HepG2 (cell line): ENCODE measurements at regions of chr20 and their contacts with region 1.

Region 1: GRCh38 chr20:35699127-35699975 is at the starts of genes NFS1 and ROMO1:
- DNase-seq: peak; percentile 94
- ATAC-seq: peak; percentile 84
- H3K4me3 ChIP-seq: peak within 1 kb of the TSS; percentile 90 to 98 (median 96)
- H3K27ac ChIP-seq: peak within 1 kb of the TSS; percentile 88
- H3K4me1 ChIP-seq: peaks cover 49% of the 10 kb centered on the region
- H3K27me3 ChIP-seq: no peaks in the 10 kb centered on the region; a peak in 1 of 5 replicates
- CTCF ChIP-seq: peak; percentile 94
- EP300 ChIP-seq: peak; percentile 19 to 54; a peak in 3 of 4 replicates
- POLR2A ChIP-seq: peak; percentile 93 to 96
- RAD21 ChIP-seq: peak; percentile 96
- total RNA-seq, gene NFS1: 88.1 and 94.4 TPM in 2 replicates
- total RNA-seq, gene ROMO1: 636 and 726 TPM in 2 replicates

Region 2: DNA sequence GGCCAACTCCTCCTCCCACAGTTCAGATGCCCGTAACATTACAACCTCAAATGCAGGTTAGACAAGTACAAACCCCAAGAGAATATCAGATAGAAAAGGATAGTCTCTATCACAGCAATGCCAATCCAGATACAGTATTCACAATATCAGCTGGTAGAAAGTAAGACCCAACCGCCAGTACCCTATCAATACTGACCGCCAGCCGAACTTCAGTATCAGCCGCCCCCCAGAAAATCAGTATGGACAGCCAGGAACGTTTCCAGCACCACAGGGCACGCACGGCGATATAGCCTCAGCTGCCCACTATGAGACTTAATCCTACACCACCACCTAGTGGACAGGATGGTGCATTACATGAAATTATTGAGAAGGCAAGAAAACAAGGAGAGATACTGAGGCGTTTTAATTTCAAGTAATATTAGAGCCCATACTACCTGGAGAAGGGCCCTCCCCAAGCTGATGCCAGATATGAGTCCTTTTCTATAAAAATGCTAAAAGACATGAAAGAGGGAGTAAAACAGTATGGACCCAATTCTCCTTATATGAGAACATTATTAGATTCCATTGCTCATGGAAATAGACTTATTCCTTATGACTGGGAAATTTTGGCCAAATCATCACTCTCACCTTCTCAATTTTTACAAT is 1569.7 kb before region 1 on chr20:
- CTCF ChIA-PET with region 1: no interaction called
- POLR2A ChIA-PET with region 1: no interaction called
- in situ Hi-C with region 1: no loop called
- intact Hi-C with region 1: no loop called
- DNase-seq: peak; percentile 89
- ATAC-seq: peak; percentile 94
- H3K4me3 ChIP-seq: peak overlapping the region in 1 of 3 experiments; percentile 36; a peak in 2 of 6 replicates
- H3K27ac ChIP-seq: no peak overlapping the region
- H3K4me1 ChIP-seq: peaks cover 58% of the 10 kb centered on the region
- H3K27me3 ChIP-seq: no peaks in the 10 kb centered on the region
- CTCF ChIP-seq: peak; percentile 98
- EP300 ChIP-seq: no peak
- POLR2A ChIP-seq: no peak
- RAD21 ChIP-seq: peak; percentile 96

Region 3: GRCh38 chr20:35619196-35620095 is 79.9 kb before region 1 on chr20:
- CTCF ChIA-PET with region 1: interaction called, 3 read pairs
- POLR2A ChIA-PET with region 1: interaction called, 21 read pairs
- in situ Hi-C with region 1: no loop called
- intact Hi-C with region 1: loop called (anchors 1 kb)
- DNase-seq: peak; percentile 94
- ATAC-seq: peak; percentile 69
- H3K4me3 ChIP-seq: peak overlapping the region; percentile 59 to 96 (median 67)
- H3K27ac ChIP-seq: peak overlapping the region; percentile 0
- H3K4me1 ChIP-seq: peaks cover 26% of the 10 kb centered on the region
- H3K27me3 ChIP-seq: peaks cover 0 to 7% of the 10 kb centered on the region in 2 experiments; a peak in 1 of 5 replicates
- CTCF ChIP-seq: peak; percentile 93
- EP300 ChIP-seq: peak in 1 of 2 experiments; percentile 32; a peak in 1 of 4 replicates
- POLR2A ChIP-seq: peak in 1 of 2 experiments; percentile 74; a peak in 2 of 4 replicates
- RAD21 ChIP-seq: peak; percentile 78

Region 4: GRCh38 chr20:35635652-35636051 is 63.7 kb before region 1 on chr20:
- CTCF ChIA-PET with region 1: no interaction called
- POLR2A ChIA-PET with region 1: no interaction called
- in situ Hi-C with region 1: no loop called
- intact Hi-C with region 1: no loop called
- DNase-seq: peak; percentile 76
- ATAC-seq: peak; percentile 76
- H3K4me3 ChIP-seq: no peak overlapping the region
- H3K27ac ChIP-seq: peak overlapping the region; percentile 68
- H3K4me1 ChIP-seq: peaks cover 34% of the 10 kb centered on the region
- H3K27me3 ChIP-seq: no peaks in the 10 kb centered on the region
- CTCF ChIP-seq: no peak
- EP300 ChIP-seq: no peak
- POLR2A ChIP-seq: no peak; a peak in 1 of 4 replicates
- RAD21 ChIP-seq: no peak

Region 5: DNA sequence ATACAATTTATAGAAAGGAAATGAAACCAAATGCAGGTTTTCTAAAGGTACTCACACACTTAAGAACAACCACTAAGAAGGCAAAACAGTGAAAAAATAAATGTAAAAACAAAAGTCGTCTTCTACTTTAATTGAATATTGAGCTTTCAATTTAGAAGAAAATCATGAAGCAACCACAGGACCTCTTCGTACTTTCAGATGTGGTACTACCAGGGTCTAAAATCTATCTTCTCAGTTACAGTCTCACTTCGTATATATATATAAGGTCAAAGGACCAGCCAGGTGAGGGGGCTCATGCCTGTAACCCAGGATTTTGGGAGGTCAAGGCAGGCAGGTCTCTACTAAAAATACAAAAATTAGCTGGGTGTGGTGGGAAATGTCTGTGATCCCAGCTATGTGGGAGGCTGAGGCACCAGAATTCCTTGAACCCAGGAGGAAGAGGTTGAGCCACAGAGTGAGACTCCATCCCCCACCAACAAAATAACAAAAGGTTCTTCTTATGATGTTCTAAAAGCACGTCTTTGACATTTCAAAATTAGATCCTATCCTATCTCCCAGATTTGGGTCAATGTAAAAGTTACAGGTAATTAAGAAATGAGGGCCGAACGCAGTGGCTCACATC is 12.3 kb after region 1 on chr20:
- CTCF ChIA-PET with region 1: no interaction called
- POLR2A ChIA-PET with region 1: interaction called, 57 read pairs
- in situ Hi-C with region 1: no loop called
- intact Hi-C with region 1: no loop called
- DNase-seq: no peak
- ATAC-seq: no peak
- H3K4me3 ChIP-seq: no peak overlapping the region
- H3K27ac ChIP-seq: no peak overlapping the region
- H3K4me1 ChIP-seq: no peaks in the 10 kb centered on the region; the same call in 1 of the 2 replicates
- H3K27me3 ChIP-seq: no peaks in the 10 kb centered on the region
- CTCF ChIP-seq: no peak
- EP300 ChIP-seq: no peak
- POLR2A ChIP-seq: no peak; a peak in 1 of 4 replicates
- RAD21 ChIP-seq: 0 out of 2 replicates have a peak, but pooled peaks have one; percentile 7

Region 6: GRCh38 chr20:35735828-35736470 is 36.6 kb after region 1 on chr20:
- CTCF ChIA-PET with region 1: no interaction called
- POLR2A ChIA-PET with region 1: interaction called, 319 read pairs
- in situ Hi-C with region 1: no loop called
- intact Hi-C with region 1: no loop called
- DNase-seq: no peak
- ATAC-seq: no peak
- H3K4me3 ChIP-seq: no peak overlapping the region; a peak in 1 of 6 replicates
- H3K27ac ChIP-seq: no peak overlapping the region
- H3K4me1 ChIP-seq: peaks cover 96% of the 10 kb centered on the region
- H3K27me3 ChIP-seq: no peaks in the 10 kb centered on the region; a peak in 1 of 5 replicates
- CTCF ChIP-seq: no peak
- EP300 ChIP-seq: no peak
- POLR2A ChIP-seq: peak; percentile 37 to 68; a peak in 2 of 4 replicates
- RAD21 ChIP-seq: no peak

Region 7: GRCh38 chr20:35883778-35884540 is 184.6 kb after region 1 on chr20:
- CTCF ChIA-PET with region 1: no interaction called
- POLR2A ChIA-PET with region 1: interaction called, 3 read pairs
- in situ Hi-C with region 1: no loop called
- intact Hi-C with region 1: loop called (anchors 10 kb)
- DNase-seq: peak; percentile 82
- ATAC-seq: peak; percentile 99
- H3K4me3 ChIP-seq: no peak overlapping the region
- H3K27ac ChIP-seq: no peak overlapping the region
- H3K4me1 ChIP-seq: no peaks in the 10 kb centered on the region
- H3K27me3 ChIP-seq: no peaks in the 10 kb centered on the region
- CTCF ChIP-seq: peak; percentile 95
- EP300 ChIP-seq: no peak
- POLR2A ChIP-seq: no peak
- RAD21 ChIP-seq: peak; percentile 95